A673 (cell line): ENCODE measurements at regions of chr1 and their contacts with region 1.

Region 1: DNA sequence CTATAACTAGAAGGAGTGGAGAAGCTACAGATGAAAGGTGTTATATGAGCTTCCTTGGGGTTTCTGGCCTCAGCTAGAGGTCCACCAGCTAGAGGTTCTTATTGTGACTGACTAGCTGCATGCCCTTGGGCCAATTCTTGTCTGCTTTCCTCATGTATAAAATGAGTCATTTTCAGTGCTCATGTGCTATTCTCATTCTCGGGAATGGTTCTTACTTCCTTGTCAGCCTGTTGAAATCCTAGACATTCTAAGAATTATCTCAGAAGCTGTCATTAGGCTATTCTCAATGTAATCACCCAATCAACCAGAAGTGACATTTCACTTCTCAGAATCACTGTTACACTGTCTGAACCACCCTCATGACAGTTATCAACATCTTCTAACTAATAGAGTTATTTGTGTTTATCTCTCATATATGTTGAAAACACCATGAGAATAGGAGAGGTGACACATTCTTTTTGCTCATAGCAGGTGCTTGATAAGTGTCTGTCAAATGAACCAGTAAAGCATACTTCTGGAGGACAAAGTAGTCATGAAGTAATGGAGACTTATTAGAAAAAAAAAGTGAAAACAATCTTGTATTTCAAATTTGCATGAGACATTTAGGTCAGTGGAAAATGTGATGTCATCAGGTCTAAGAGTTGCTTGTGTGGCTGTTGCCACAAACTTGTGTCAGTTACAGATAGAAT is 122.8 kb upstream of the IVNS1ABP start:
- DNase-seq: peak; percentile 14
- H3K4me3 ChIP-seq: no peak overlapping the region
- H3K27ac ChIP-seq: no peak overlapping the region
- H3K4me1 ChIP-seq: peaks cover 3% of the 10 kb centered on the region
- H3K27me3 ChIP-seq: no peaks in the 10 kb centered on the region
- CTCF ChIP-seq: no peak

Region 2: DNA sequence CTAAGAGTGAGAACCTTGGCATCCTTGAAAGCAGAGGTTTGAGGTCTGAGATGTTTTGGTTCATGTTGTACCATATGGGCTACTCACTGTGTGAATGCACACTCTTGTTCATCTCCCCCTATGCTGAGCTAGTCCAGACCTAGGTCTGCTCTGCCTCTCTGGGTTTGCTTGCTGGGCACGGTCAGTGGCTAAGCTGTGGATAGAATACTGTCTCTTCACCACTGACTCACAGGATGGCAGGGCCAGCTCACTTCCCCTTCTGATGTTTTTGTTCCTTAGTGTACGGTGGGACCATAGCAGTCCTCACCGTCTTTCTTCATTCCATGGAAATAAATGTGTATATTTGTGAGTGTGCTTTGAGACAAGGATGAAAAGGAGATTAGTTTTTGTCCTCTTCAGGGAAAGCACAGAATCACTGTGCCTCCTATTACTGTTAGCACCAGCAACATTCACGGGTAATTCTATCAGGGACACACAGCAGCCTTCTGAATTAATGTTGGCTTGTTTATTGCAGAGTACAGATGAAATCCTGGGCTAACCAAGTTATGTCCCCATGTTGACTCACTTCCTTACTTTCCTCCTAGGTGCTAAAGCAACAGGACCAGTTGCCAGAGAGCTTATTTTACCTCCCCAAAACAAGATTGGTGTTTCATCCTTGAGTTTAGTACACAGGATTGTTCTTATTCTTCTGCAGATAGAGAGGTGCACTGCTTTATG is 65.9 kb before region 1 on chr1:
- CTCF ChIA-PET with region 1: no interaction called
- POLR2A ChIA-PET with region 1: no interaction called
- intact Hi-C with region 1: no loop called
- DNase-seq: no peak
- H3K4me3 ChIP-seq: no peak overlapping the region
- H3K27ac ChIP-seq: no peak overlapping the region
- H3K4me1 ChIP-seq: no peaks in the 10 kb centered on the region
- H3K27me3 ChIP-seq: no peaks in the 10 kb centered on the region
- CTCF ChIP-seq: no peak

Region 3: DNA sequence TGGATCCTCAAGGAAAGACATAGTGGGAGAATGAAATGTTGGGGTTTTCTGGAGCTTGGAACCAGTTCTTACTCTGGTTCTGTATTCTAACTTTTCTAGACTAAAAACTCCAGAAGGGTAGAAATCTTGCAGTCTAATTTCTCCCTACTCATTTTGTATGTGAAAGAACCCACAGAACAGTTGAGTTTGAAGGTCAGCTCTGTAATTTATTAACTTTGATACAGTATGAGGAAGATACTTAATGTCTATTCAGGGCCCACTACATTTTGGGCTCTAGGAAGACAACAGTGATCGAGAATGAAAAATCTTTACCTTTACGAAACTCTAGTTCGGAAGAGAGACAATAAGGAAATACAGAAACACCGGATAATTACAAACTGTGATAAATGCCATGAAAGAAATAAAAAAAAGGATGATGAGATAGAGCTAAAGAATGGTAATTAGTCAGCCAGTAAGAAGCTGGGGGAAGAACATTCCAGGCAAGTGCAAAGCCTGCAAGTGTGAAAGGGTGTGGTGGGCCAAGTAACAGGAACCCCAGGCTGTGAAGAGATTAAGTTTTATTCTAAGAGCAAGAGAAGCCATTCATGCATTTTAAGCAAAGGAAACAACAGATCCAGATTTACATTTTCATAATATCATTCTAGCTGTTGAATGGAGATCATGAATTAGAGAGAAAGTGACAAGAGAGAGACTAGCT is 134.4 kb after region 1 on chr1:
- CTCF ChIA-PET with region 1: no interaction called
- POLR2A ChIA-PET with region 1: interaction called, 17 read pairs
- intact Hi-C with region 1: no loop called
- DNase-seq: peak; percentile 83
- H3K4me3 ChIP-seq: no peak overlapping the region
- H3K27ac ChIP-seq: no peak overlapping the region
- H3K4me1 ChIP-seq: peaks cover 16% of the 10 kb centered on the region
- H3K27me3 ChIP-seq: no peaks in the 10 kb centered on the region
- CTCF ChIP-seq: no peak